ENCODE measurements at regions of chr13 and their contacts with region 1.

Region 1: DNA sequence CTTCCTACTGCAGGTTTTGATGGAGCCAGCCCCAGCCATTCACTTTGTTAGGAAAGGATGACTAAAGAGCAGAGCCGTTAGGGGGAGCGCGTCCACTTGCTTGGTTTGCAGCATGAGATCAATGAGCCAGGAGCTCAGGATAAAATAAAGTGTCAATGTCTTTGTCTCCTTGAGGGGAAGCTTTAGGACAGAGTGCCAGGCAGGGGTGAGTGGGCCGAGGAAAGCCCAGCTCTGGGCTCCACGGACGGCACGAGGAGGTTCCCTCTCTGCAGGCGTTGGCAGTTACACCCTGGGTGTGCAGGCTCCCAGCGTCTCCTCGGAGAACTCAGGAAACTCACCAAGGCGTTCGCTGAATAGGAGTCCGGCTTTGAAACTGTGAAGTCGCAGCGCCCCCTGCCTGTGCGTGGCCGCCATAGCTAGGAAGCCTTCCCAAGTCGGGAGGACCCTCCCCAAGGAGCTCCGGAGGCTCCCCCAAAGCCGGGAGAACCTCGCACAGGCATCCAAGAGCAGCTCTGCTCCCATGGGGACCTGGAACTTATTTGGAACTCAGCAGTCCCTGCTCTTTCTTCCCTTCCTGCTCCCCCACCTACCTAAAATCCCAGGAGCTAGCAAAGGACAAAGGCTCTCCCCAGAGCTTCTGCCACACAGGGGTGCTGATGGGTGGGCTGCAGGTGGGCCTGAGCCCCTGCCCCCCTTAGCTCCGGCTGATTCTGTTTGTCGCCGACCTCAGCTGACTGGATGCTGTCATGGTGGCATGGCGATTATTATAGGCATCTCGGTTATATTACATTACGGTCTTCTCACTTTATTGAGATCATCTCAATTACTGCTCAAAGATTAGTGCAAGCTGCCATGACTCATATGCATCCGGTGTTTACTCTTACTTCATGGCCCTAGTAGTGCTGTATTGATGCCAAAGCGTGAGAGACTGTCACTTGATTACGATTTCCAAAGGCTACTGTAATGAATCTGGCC is 34.4 kb downstream of the GSX1 start:
- DNase-seq: peak; percentile 91
- H3K4me3 ChIP-seq: no peak overlapping the region
- H3K27ac ChIP-seq: no peak overlapping the region
- H3K4me1 ChIP-seq: no peaks in the 10 kb centered on the region
- H3K27me3 ChIP-seq: no peaks in the 10 kb centered on the region
- CTCF ChIP-seq: peak; percentile 86 to 90 (median 87)
- POLR2A ChIP-seq: no peak

Region 2: DNA sequence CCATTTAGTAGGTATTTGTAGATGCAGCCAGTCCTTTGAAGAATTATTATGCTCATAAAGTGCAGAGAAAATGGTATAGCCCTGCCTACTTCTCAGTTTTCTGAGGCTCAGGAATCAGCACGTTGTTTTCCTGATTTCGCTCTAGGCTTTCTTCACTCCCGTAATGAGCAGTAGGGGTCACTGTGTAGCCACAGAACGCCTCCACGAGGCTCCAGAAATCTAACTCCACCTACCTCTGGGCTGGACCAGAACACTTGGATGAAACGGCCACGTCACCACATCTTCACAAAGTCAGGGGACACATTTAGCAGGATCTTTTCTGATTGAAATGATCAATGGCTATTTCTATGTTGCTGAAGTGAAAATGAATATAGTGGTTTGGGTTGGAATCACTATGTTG is 452.0 kb before region 1 on chr13:
- intact Hi-C with region 1: loop called (anchors 5 kb)
- DNase-seq: peak; percentile 79
- H3K4me3 ChIP-seq: no peak overlapping the region
- H3K27ac ChIP-seq: no peak overlapping the region
- H3K4me1 ChIP-seq: peaks cover 6% of the 10 kb centered on the region
- H3K27me3 ChIP-seq: no peaks in the 10 kb centered on the region
- CTCF ChIP-seq: peak; percentile 36 to 60 (median 60)
- POLR2A ChIP-seq: no peak

Region 3: DNA sequence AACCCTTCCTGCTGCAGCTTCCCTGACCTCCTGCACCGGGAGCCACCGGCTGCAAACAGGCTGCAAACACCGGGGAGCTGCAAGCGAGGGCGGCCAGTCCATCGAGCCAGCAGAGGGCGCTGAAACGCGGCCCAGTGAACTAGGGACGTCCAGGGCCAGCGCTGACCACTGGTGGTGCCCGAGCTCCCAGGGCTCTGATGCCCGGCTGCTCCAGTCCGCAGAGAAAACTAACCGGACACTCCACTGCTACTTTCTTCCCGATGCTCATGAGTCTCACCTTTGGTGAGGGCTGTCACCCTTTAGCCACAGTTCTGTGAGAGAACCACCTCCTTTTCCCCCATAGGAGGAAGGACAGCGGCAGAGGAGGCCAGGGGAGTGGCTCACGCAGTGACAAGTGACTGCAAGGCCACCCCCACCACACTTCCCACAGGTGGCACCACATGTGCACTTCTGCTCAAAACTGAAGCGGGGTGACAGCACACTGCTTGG is 293.5 kb before region 1 on chr13:
- intact Hi-C with region 1: loop called (anchors 10 kb)
- DNase-seq: peak; percentile 92
- H3K4me3 ChIP-seq: no peak overlapping the region
- H3K27ac ChIP-seq: no peak overlapping the region
- H3K4me1 ChIP-seq: peaks cover 7% of the 10 kb centered on the region
- H3K27me3 ChIP-seq: no peaks in the 10 kb centered on the region
- CTCF ChIP-seq: peak; percentile 78 to 79 (median 79)
- POLR2A ChIP-seq: no peak

Region 4: DNA sequence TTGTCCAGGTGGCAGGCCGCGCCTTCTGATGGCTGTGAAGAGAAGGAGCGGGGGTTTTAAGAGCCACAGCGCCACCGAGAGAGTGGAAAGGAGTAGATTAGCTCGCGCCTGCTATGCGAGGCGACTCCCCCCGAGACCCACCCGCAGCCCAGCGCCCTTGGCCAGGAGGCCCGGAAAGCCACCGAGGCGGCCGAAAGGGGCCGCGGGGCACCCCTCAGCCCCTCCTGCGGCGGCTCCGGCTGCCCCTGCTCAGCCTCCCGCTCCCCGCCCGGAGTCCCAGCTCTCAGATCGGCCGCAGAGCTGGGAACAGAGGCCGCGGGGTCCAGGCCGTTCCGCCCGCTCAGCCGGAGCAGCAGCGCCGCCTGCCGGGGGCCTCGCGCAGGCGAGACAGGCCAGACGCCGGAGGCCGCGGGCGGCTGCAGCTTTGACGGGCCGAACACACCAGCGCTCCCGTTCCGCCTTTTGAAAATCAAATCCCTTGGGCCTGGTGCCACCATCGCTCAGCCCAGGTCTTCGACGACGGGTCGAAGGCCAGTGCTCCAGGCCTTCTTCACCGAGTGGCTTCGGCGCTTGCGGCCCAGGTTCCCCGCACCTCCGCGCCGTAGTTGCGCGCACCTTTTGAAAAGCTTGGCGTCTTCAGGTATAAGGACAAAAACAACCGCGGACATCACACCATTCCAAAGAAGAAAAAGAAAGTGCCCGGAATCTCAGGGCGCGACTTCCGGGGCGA is 127.2 kb after region 1 on chr13:
- intact Hi-C with region 1: loop called (anchors 10 kb)
- DNase-seq: peak; percentile 85
- H3K4me3 ChIP-seq: peak overlapping the region; percentile 59 to 69
- H3K27ac ChIP-seq: peak overlapping the region; percentile 60 to 87
- H3K4me1 ChIP-seq: peaks cover 9% of the 10 kb centered on the region
- H3K27me3 ChIP-seq: no peaks in the 10 kb centered on the region
- CTCF ChIP-seq: peak; percentile 86 to 88 (median 88)
- POLR2A ChIP-seq: no peak

Region 5: GRCh38 chr13:28843639-28844038 is 1017.0 kb after region 1 on chr13:
- intact Hi-C with region 1: no loop called
- DNase-seq: no peak
- H3K4me3 ChIP-seq: no peak overlapping the region
- H3K27ac ChIP-seq: no peak overlapping the region
- H3K4me1 ChIP-seq: no peaks in the 10 kb centered on the region
- H3K27me3 ChIP-seq: no peaks in the 10 kb centered on the region
- CTCF ChIP-seq: no peak
- POLR2A ChIP-seq: no peak

Measured in testis (tissue), 5 donors.